Pancreas (tissue), 10 donors: ENCODE measurements at regions of chr2 and their contacts with region 1.

Region 1: DNA sequence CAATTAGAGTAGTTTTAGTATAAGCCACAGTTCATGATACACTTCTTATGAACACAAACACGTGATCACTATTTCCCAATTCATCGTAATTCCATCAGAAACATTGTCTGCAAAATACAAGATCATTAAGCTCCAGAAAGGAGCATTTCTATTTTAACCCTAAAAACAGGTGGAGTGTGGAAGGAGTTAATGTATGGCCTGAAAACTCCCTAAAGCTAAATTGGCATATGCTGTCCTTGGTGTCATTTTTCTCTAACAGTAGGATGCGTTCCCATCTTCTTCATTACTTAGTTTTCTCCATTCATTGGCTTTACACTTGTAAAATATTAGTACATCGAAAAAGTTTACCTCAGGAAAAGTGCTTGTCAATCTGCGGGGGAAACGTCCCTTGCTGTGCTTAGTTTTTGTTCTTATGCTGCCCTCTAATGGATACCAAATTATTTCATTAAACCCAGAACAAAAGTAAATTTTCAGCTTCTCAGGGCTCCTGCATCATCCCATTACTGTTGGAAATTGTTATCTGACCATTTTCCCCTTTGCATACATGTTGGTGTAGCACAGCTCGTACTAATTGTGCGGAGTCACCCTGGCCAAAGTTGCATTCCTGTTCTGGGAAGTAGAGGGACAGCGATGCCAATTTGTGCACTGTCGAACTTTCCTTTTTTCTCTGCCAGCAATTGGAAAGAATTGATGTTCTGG is 153.4 kb downstream of the GPD2 start:
- DNase-seq: peak in 2 of 6 donors; percentile 5 to 17
- ATAC-seq: peak; percentile 38 to 90 (median 84)
- H3K4me3 ChIP-seq: no peak overlapping the region
- H3K27ac ChIP-seq: no peak overlapping the region
- H3K4me1 ChIP-seq: no peaks in the 10 kb centered on the region
- H3K27me3 ChIP-seq: no peaks in the 10 kb centered on the region
- CTCF ChIP-seq: peak in 2 of 4 donors; percentile 25 to 37

Region 2: GRCh38 chr2:156319811-156320485 is 269.6 kb before region 1 on chr2:
- intact Hi-C with region 1: loop called in 1 of 3 experiments (anchors 10 kb)
- DNase-seq: peak; percentile 81 to 89 (median 84)
- ATAC-seq: peak; percentile 87 to 92 (median 90)
- H3K4me3 ChIP-seq: peak overlapping the region; percentile 31 to 49 (median 42)
- H3K27ac ChIP-seq: peak overlapping the region; percentile 66 to 84 (median 82)
- H3K4me1 ChIP-seq: peaks cover 0 to 8% (median 0%) of the 10 kb centered on the region in 3 donors
- H3K27me3 ChIP-seq: no peaks in the 10 kb centered on the region
- CTCF ChIP-seq: peak in 2 of 4 donors; percentile 8 to 15

Region 3: GRCh38 chr2:156635646-156636045 is 46.1 kb after region 1 on chr2:
- intact Hi-C with region 1: no loop called
- DNase-seq: no peak
- ATAC-seq: no peak
- H3K4me3 ChIP-seq: no peak overlapping the region
- H3K27ac ChIP-seq: no peak overlapping the region
- H3K4me1 ChIP-seq: no peaks in the 10 kb centered on the region
- H3K27me3 ChIP-seq: no peaks in the 10 kb centered on the region
- CTCF ChIP-seq: no peak